Breast epithelium (tissue), 4 donors: ENCODE measurements at regions of chr1 and their contacts with region 1.

Region 1: DNA sequence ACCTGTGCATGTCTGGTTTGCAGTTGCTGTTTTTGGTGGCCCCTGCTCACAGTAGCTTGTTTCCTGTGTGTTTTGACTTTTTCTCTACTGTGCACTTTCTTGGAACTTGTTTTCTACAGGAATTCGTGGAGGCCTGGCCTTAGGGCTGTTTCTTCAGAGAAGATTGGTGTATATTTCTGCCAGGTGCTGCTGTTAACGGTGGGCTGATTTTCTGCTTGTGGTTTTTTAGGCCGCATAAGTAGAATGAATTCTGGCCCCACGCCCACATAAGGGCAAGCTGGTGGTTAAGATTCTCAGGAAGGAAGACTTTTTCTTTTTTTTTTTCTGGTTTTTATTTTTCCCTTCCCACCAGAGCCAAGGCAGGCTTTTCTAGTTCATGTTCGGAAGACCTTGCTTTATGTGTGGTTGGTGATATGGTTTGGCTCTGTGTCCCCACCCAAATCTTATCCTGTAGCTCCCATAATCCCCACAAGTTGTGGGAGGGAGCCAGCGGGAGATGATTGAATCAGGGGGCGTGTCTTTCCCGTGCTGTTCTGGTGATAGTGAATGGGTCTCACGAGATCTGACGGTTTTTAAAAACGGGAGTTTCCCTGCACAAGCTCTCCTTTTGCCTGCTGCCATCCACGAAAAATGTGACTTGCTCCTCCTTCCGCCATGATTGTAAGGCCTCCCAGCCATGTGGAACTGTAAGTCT is 71.5 kb upstream of the DISP3 start:
- DNase-seq: peak in 1 of 2 donors; percentile 51
- H3K4me3 ChIP-seq: no peak overlapping the region
- H3K27ac ChIP-seq: no peak overlapping the region
- H3K4me1 ChIP-seq: no peaks in the 10 kb centered on the region
- H3K27me3 ChIP-seq: peaks cover 0 to 4% of the 10 kb centered on the region in 2 donors
- CTCF ChIP-seq: no peak
- POLR2A ChIP-seq: no peak

Region 2: DNA sequence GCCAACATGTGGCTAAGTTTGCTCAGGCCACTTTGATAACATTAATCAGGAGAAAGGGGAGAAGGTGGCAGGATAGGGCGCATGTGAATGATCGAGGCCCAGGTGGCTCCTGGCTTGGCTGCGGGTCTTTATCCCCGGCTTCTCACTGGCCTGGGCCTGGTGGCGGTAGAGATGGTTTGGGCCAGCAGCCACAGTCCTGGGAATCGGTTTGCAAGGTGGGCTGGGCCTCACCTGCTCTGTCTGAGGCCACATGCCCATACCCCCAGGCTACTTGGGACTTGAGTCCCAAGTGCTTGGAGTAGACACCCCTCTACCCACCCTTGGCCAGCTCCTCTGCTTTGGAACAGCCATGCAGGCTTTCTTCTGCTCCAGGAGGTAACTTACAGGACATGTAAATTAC is 21.8 kb after region 1 on chr1:
- intact Hi-C with region 1: no loop called
- DNase-seq: no peak
- H3K4me3 ChIP-seq: no peak overlapping the region
- H3K27ac ChIP-seq: no peak overlapping the region
- H3K4me1 ChIP-seq: no peaks in the 10 kb centered on the region
- H3K27me3 ChIP-seq: peaks cover 0 to 3% of the 10 kb centered on the region in 2 donors
- CTCF ChIP-seq: no peak
- POLR2A ChIP-seq: no peak

Region 3: DNA sequence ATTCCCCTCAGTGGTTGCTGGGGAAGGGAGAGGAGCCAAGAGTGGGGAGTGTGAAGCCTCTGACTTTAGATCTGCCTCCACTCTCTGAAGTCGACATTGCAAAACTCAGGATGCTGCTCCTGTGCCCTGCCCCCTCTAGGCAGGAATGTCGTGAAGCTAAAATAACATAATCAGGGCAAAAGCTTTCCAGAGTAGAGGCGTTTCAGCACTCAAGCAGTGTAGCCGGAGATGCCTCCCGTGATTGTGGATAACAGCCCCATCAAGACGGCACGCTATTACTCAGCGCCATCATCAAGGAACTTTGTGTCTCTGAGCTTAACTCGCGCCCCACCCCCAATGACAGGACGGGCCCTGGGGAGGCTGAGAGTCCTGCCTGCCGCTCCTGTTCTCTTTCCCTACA is 186.8 kb after region 1 on chr1:
- intact Hi-C with region 1: loop called (anchors 10 kb)
- DNase-seq: no peak
- H3K4me3 ChIP-seq: no peak overlapping the region
- H3K27ac ChIP-seq: no peak overlapping the region
- H3K4me1 ChIP-seq: no peaks in the 10 kb centered on the region
- H3K27me3 ChIP-seq: peaks cover 0 to 10% of the 10 kb centered on the region in 2 donors
- CTCF ChIP-seq: no peak
- POLR2A ChIP-seq: no peak